Right cardiac atrium (tissue), 5 donors: ENCODE measurements at regions of chr1 and their contacts with region 1.

Region 1: DNA sequence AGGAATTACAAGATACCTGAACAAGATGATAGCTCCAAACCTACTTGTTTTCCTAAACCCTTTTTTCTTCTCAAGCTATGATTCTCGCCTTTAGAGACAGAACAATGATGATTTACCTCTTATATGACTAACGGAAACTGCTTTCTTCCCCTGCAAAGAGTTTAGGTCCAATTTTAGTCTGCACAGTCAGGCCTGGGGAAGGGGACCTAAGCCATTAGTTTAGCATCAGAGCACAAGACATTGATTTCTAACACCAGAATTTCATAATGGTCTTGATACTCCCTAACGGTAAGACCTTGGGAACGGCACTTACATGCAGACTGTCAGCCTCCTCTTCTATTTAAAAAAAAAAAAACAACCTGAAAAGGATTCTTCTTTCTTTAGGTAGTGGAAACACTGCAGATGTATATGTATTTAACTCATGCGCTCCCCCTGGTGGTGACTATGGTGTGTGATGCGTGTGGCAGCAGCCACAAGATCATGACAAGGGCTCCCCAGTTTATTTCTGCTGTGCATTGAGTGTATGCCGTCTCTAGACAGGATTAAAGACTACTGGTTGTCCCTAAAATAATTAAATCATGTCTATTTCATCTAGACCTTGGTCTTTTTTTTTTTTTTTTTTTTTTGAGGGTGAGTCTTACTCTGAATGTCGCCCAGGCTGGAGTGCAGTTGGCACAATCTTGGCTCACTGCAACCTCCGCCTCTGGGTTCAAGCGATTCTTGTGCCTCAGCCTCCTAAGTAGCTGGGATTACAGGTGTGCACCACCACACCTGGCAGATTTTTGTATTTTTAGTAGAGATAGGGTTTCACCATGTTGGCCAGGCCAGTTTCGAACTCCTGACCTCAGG is 37.3 kb upstream of the TMEM222 start:
- DNase-seq: peak; percentile 85 to 96 (median 89)
- ATAC-seq: peak; percentile 75 to 90
- H3K4me3 ChIP-seq: no peak overlapping the region
- H3K27ac ChIP-seq: no peak overlapping the region
- H3K4me1 ChIP-seq: no peaks in the 10 kb centered on the region
- H3K27me3 ChIP-seq: no peaks in the 10 kb centered on the region

Region 2: DNA sequence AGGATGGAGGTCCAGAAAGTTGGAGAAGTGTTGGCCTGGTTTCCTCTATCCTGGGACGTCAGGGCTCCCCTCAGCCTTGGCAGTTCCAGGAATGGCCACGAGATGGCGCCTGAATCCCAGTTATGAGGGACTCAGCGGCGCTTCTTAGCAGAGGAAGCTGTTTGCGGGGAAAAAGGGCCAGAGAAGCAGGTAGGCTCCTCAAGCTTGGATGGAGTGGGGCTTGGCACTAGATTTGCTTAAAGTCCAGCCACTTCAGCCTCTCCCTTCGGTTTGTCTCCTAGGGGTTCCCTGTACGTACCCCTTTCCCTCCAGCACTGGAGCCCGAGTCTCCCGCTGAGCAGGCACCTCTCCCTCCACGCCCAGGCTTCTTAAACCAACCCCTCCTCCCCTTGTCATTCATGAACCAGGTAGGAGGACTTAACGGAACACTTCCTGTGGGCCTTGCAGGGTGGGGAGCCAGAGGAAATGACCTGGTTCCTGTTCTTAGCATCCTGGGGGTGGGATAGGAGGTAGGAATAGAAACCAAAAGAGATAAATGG is 240.0 kb before region 1 on chr1:
- intact Hi-C with region 1: loop called in 3 of 4 experiments (anchors 5 to 10 kb)
- DNase-seq: peak; percentile 86 to 95 (median 95)
- ATAC-seq: peak; percentile 89 to 90
- H3K4me3 ChIP-seq: no peak overlapping the region
- H3K27ac ChIP-seq: no peak overlapping the region
- H3K4me1 ChIP-seq: no peaks in the 10 kb centered on the region
- H3K27me3 ChIP-seq: no peaks in the 10 kb centered on the region

Region 3: DNA sequence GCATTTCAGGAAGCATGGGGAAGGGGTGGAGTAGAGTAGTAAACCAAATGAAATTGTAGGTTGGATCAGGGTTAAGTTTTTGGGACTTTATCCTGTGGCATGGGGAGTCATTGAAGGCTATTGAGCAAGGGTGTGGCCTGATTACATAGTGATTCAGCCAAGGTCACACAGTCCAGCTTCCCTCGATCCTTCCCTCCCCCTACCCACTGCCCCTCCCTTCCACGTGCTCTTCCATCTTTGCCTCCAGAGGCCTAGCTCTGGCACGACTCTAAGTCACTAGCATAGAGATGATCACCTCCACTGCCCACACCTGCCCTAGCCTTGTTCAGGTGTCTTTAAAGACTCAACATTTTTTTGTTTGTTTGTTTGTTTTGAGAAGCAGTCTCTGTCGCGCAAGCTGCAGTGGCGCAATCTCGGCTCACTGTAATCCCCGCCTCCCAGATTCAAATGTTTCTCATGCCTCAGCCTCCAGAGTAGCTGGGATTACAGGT is 92.6 kb before region 1 on chr1:
- intact Hi-C with region 1: loop called in 2 of 4 experiments (anchors 5 to 10 kb)
- DNase-seq: no peak
- ATAC-seq: peak; percentile 41 to 55
- H3K4me3 ChIP-seq: no peak overlapping the region
- H3K27ac ChIP-seq: no peak overlapping the region
- H3K4me1 ChIP-seq: no peaks in the 10 kb centered on the region
- H3K27me3 ChIP-seq: no peaks in the 10 kb centered on the region